Spleen (tissue), 13 donors: ENCODE measurements at regions of chr22 and their contacts with region 1.

Region 1: DNA sequence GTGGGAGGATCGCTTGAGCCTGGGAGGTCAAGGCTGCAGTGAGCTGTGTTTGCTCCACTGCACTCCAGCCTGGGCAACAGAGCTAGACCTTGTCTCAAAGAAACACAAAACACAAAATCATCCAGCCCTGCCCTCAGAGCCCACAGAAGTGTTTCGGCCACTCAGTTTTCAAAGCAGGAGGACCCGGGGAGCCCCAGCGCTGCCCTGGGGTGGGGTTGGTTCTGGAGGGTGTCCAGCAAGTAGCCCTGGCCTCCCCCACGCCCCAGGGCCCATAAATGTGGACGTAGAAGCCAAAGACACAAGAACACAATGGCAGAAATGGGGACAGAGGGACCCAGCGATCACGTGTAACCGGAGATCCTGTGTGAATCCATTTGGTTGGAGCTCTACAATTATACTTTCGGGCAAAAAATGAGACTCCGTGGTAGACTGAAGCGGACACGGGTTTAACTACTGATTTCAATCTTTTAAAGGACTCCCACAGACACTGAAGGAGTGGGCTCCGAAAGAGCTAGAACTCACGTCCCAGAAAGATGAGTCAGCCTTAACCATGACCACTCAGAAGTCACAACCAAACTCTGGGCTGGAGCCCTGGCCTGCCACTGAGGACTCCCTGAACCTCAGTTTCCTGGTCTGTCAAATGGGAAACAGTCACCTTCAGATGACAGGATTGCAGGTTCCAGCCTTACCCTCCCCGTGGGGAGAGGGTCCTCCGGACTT is 9.0 kb upstream of the CYTH4 start:
- DNase-seq: peak; percentile 65
- H3K4me3 ChIP-seq: no peak overlapping the region
- H3K27ac ChIP-seq: peak overlapping the region in 2 of 8 donors; percentile 51 to 63
- H3K4me1 ChIP-seq: peaks cover 0 to 88% (median 44%) of the 10 kb centered on the region in 6 donors
- H3K27me3 ChIP-seq: no peaks in the 10 kb centered on the region
- CTCF ChIP-seq: no peak
- POLR2A ChIP-seq: no peak

Region 2: GRCh38 chr22:37309211-37310074 is 36.2 kb after region 1 on chr22:
- intact Hi-C with region 1: loop called (anchors 5 kb)
- DNase-seq: peak; percentile 88
- H3K4me3 ChIP-seq: peak overlapping the region in 5 of 8 donors; percentile 6 to 43 (median 7)
- H3K27ac ChIP-seq: peak overlapping the region; percentile 44 to 96 (median 74)
- H3K4me1 ChIP-seq: peaks cover 58 to 100% (median 76%) of the 10 kb centered on the region in 6 donors
- H3K27me3 ChIP-seq: no peaks in the 10 kb centered on the region
- CTCF ChIP-seq: no peak
- POLR2A ChIP-seq: no peak